ENCODE measurements at regions of chr9 and their contacts with region 1.

Region 1: DNA sequence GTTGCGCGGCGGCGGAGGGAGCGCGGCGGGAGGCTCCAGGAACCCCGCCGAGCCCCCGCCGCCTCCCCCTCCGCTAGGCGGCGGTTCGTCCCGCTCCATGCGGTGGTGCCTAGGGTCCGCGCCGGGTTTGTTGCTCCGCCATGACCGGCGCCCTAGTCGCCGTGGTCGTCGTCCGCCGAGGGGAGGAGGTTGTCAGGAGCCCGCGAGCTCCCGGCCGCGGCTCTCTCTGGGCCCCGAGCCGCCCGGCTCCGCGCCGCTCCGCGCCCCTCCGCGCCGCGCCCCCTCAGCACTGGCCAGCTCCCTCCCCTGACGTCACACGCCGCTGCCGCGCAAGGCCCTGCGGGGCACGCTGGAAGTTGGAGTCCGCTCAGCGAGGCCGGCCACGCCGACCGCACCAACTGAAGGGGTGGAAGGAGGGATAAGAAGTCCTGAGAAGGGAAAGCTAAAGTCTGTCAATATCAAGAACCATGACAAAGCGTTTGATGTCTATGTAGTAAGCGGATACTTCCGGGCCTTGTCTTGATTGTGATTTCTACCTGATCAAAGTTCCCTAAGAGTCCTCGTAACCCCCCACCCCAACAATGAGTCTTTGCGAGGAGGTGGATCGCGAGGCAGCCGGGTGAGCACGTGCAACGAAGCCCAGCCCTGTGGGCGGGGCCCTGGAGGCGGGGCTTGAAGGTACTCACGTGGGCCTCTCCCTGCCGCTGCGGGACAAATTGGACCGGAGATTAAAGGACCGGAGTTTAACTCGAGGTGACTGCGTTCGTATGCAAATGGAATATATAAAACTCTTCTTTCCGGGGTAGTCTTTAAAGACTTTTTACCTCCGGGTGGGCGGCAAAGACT is at the start of gene NR6A1:
- DNase-seq: peak; percentile 97
- CTCF ChIP-seq: no peak

Region 2: DNA sequence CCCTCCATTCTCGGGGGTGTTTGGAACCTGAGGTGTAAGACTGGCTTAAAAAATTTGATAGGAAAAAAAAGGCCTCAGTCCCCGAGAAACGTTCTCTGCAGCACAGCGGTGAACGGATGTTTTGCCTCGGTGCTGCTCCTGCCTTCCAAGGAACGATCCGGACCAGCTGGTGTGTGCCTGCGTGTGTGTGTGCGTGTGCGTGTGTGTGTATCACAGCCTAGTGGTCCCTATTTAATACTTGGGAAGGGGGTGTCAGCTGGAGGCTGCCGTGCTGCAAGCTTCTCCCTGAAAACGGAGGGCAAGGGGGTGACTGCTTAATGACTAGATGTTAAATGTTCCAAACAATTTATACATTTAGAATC is 682.8 kb before region 1 on chr9:
- CTCF ChIA-PET with region 1: no interaction called
- POLR2A ChIA-PET with region 1: no interaction called
- DNase-seq: no peak
- CTCF ChIP-seq: no peak

Region 3: GRCh38 chr9:124794902-124795491 is 23.8 kb after region 1 on chr9:
- CTCF ChIA-PET with region 1: interaction called, 79 read pairs
- POLR2A ChIA-PET with region 1: no interaction called
- DNase-seq: no peak
- CTCF ChIP-seq: no peak

Region 4: GRCh38 chr9:124812401-124813016 is 41.3 kb after region 1 on chr9:
- CTCF ChIA-PET with region 1: interaction called, 27 read pairs
- POLR2A ChIA-PET with region 1: no interaction called
- DNase-seq: no peak
- CTCF ChIP-seq: no peak

Region 5: GRCh38 chr9:124861342-124862229 is 90.3 kb after region 1 on chr9 and contains the starts of genes ARPC5L and RPL35:
- CTCF ChIA-PET with region 1: interaction called, 814 read pairs
- POLR2A ChIA-PET with region 1: interaction called, 9 read pairs
- DNase-seq: peak; percentile 99
- CTCF ChIP-seq: no peak

Region 6: GRCh38 chr9:124889006-124889405 is 117.8 kb after region 1 on chr9:
- CTCF ChIA-PET with region 1: interaction called, 31 read pairs
- POLR2A ChIA-PET with region 1: no interaction called
- DNase-seq: no peak
- CTCF ChIP-seq: no peak

Region 7: DNA sequence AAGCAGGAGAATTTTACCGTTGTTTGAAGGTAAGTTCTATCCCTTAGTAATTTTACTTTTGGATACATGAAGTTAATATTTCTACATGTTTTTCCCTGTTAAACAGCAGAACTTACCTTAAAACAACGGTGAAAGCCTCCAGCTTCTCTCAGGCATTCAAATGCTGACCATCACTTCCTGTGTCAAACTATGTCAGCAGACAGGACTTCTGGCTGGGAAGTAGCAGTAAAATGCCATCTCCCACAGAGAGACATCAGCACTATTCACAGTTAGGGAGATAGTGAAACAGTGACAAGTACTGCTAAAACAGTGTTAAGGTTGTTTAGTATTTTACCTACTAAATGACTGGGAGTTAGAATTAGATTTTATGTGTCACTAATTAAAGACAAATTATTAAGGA is 203.9 kb after region 1 on chr9:
- CTCF ChIA-PET with region 1: no interaction called
- POLR2A ChIA-PET with region 1: no interaction called
- DNase-seq: no peak
- CTCF ChIP-seq: no peak

Measured in GM10248 (cell line).